ENCODE measurements at regions of chr1 and their contacts with region 1.

Region 1: DNA sequence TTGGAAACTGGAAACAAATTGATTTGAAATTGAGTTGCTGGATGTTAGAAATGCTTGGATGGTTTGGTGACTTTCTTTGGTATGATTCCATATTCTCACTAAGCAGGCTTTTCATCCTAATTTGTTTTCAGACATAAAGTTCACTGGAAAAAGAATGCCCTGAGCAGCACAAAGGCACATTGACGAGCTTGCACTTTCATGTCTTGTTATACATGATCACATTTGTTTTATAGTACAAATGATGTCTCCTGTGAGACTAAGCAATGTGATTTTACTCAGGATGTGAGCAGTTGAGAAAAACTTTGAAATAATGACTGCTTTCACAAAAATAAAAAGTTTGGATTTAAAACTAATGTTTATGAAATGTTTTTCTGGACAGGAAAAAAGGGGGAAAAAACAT is 63.6 kb downstream of the KCNT2 start:
- DNase-seq: no peak
- H3K4me3 ChIP-seq: no peak overlapping the region
- H3K27ac ChIP-seq: no peak overlapping the region
- H3K4me1 ChIP-seq: no peaks in the 10 kb centered on the region
- H3K27me3 ChIP-seq: no peaks in the 10 kb centered on the region
- CTCF ChIP-seq: no peak

Region 2: GRCh38 chr1:196466654-196467053 is 78.0 kb before region 1 on chr1:
- CTCF ChIA-PET with region 1: no interaction called
- dilution Hi-C with region 1: no loop called
- in situ Hi-C with region 1: no loop called
- intact Hi-C with region 1: no loop called
- DNase-seq: peak; percentile 72
- H3K4me3 ChIP-seq: no peak overlapping the region
- H3K27ac ChIP-seq: no peak overlapping the region
- H3K4me1 ChIP-seq: peaks cover 9% of the 10 kb centered on the region
- H3K27me3 ChIP-seq: no peaks in the 10 kb centered on the region
- CTCF ChIP-seq: no peak

Region 3: DNA sequence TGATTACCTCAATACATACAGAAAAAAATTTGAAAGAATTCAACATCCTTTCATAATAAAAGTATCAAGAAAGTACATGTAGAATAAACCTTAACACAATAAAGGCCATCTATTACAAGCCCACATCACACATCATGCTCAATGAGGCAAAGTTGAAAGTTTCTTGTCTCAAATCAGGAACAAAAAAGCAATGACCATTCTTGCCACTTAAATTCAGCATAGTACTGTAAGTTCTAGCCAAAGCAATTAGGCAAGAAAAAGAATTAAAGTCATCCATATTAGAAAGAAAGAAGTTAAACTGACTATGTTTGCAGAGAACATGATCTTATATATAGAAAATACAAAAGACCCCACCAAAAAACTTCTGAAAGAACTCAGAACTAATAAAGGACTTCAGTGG is 19.2 kb after region 1 on chr1:
- CTCF ChIA-PET with region 1: no interaction called
- dilution Hi-C with region 1: no loop called
- in situ Hi-C with region 1: no loop called
- intact Hi-C with region 1: no loop called
- DNase-seq: no peak
- H3K4me3 ChIP-seq: no peak overlapping the region
- H3K27ac ChIP-seq: no peak overlapping the region
- H3K4me1 ChIP-seq: no peaks in the 10 kb centered on the region
- H3K27me3 ChIP-seq: no peaks in the 10 kb centered on the region
- CTCF ChIP-seq: no peak

Region 4: GRCh38 chr1:196593955-196594354 is 49.3 kb after region 1 on chr1:
- CTCF ChIA-PET with region 1: no interaction called
- dilution Hi-C with region 1: loop called (anchors 5 kb)
- in situ Hi-C with region 1: no loop called
- intact Hi-C with region 1: no loop called
- DNase-seq: no peak
- H3K4me3 ChIP-seq: no peak overlapping the region
- H3K27ac ChIP-seq: no peak overlapping the region
- H3K4me1 ChIP-seq: no peaks in the 10 kb centered on the region
- H3K27me3 ChIP-seq: no peaks in the 10 kb centered on the region
- CTCF ChIP-seq: no peak